Activated naive CD4-positive, alpha-beta T cell treated with anti-CD3 and anti-CD28 coated beads for 36 hours (primary cell): ENCODE measurements at regions of chr12 and their contacts with region 1.

Region 1: GRCh38 chr12:93979189-93979588 is 169.2 kb upstream of the PLXNC1 start:
- DNase-seq: peak; percentile 53
- H3K4me3 Mint-ChIP-seq: no peak overlapping the region
- H3K27ac Mint-ChIP-seq: no peak overlapping the region
- H3K4me1 Mint-ChIP-seq: peaks cover 27% of the 10 kb centered on the region
- H3K27me3 Mint-ChIP-seq: no peaks in the 10 kb centered on the region

Region 2: GRCh38 chr12:93205361-93205760 is 773.8 kb before region 1 on chr12:
- CTCF ChIA-PET with region 1: no interaction called
- intact Hi-C with region 1: no loop called
- DNase-seq: no peak
- H3K4me3 Mint-ChIP-seq: no peak overlapping the region
- H3K27ac Mint-ChIP-seq: no peak overlapping the region
- H3K4me1 Mint-ChIP-seq: no peaks in the 10 kb centered on the region
- H3K27me3 Mint-ChIP-seq: no peaks in the 10 kb centered on the region

Region 3: GRCh38 chr12:93502802-93503623 is 476.2 kb before region 1 on chr12:
- CTCF ChIA-PET with region 1: interaction called, 7 read pairs
- intact Hi-C with region 1: loop called (anchors 1 kb)
- DNase-seq: peak; percentile 75
- H3K4me3 Mint-ChIP-seq: no peak overlapping the region
- H3K27ac Mint-ChIP-seq: no peak overlapping the region
- H3K4me1 Mint-ChIP-seq: peaks cover 17% of the 10 kb centered on the region
- H3K27me3 Mint-ChIP-seq: no peaks in the 10 kb centered on the region

Region 4: DNA sequence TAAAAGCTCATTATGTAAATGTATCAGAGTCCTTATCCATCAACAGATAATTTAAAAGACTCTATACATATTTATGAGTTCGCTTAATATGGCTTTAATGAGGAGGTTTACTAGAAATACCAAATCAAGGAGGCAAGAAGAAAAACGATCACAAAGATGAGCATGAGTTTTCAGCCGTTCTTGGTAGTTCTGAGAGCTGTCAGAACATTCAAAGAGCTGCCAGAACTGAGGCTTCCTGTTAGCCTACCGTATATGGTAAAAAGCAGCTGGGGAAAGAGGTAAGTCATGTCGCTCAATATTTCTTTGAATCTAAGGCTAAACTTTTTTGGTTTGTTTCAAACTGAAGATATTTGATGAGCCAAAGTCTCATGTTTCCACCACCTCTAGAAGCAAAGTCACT is 53.9 kb after region 1 on chr12:
- CTCF ChIA-PET with region 1: no interaction called
- intact Hi-C with region 1: loop called (anchors 1 kb)
- DNase-seq: peak; percentile 22
- H3K4me3 Mint-ChIP-seq: no peak overlapping the region
- H3K27ac Mint-ChIP-seq: peak overlapping the region; percentile 50
- H3K4me1 Mint-ChIP-seq: peaks cover 40% of the 10 kb centered on the region
- H3K27me3 Mint-ChIP-seq: no peaks in the 10 kb centered on the region

Region 5: DNA sequence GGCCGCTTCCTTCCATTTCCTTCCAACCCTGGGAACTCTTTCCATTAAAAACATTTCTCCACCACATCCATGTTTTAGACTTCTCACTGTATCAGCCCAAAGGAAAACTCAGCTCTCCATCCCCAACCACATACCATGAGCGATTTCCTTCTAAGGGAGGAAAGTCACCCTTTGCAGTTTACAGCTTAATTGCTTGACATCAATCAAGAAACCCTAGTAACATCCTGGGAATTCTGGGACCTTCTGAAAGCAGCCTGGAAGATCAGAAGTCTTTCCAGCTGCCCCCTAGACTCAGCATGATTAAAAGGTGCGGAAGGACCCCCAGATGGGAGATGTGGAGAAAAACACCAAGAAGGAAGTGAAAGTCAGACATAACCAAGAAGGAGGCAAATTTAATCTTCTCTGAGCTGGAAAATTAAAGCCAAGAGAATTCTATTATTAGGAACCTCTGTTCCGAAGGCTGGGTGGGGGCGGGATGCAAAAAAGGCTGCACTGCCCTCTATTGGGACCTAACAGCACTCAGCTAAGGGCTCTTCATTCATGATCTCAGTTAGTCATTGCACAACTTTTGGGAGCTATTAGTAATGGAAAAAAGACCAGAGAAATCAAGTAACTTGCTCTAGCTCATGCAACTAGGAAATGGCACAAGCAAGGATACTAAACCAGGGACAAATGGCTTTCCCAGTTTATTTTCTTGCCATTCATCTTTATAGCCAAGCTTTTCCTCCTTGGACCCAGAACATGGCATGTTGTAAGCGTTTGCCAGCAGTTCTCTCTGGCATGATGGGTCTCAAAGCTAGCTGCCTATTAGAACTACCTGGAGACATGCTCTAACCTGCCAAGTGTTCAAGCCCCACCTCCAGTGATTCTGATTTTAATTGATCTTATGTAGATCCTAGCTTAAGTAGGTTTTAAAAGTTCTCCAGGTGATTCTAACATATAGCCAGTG is 96.1 kb after region 1 on chr12:
- CTCF ChIA-PET with region 1: interaction called, 9 read pairs
- intact Hi-C with region 1: loop called (anchors 1 kb)
- DNase-seq: peak; percentile 60
- H3K4me3 Mint-ChIP-seq: no peak overlapping the region
- H3K27ac Mint-ChIP-seq: no peak overlapping the region
- H3K4me1 Mint-ChIP-seq: peaks cover 20% of the 10 kb centered on the region
- H3K27me3 Mint-ChIP-seq: no peaks in the 10 kb centered on the region